Activated naive CD4-positive, alpha-beta T cell treated with anti-CD3 and anti-CD28 coated beads for 36 hours (primary cell): ENCODE measurements at regions of chr7 and their contacts with region 1.

Region 1: GRCh38 chr7:37181550-37181932 is 267.1 kb downstream of the ELMO1 start:
- DNase-seq: no peak
- H3K4me3 Mint-ChIP-seq: no peak overlapping the region
- H3K27ac Mint-ChIP-seq: no peak overlapping the region
- H3K4me1 Mint-ChIP-seq: peaks cover 7% of the 10 kb centered on the region
- H3K27me3 Mint-ChIP-seq: no peaks in the 10 kb centered on the region

Region 2: GRCh38 chr7:36473454-36474282 is 707.9 kb before region 1 on chr7:
- CTCF ChIA-PET with region 1: interaction called, 4 read pairs
- intact Hi-C with region 1: loop called (anchors 5 kb)
- DNase-seq: peak; percentile 70
- H3K4me3 Mint-ChIP-seq: no peak overlapping the region
- H3K27ac Mint-ChIP-seq: no peak overlapping the region
- H3K4me1 Mint-ChIP-seq: peaks cover 8% of the 10 kb centered on the region
- H3K27me3 Mint-ChIP-seq: no peaks in the 10 kb centered on the region

Region 3: DNA sequence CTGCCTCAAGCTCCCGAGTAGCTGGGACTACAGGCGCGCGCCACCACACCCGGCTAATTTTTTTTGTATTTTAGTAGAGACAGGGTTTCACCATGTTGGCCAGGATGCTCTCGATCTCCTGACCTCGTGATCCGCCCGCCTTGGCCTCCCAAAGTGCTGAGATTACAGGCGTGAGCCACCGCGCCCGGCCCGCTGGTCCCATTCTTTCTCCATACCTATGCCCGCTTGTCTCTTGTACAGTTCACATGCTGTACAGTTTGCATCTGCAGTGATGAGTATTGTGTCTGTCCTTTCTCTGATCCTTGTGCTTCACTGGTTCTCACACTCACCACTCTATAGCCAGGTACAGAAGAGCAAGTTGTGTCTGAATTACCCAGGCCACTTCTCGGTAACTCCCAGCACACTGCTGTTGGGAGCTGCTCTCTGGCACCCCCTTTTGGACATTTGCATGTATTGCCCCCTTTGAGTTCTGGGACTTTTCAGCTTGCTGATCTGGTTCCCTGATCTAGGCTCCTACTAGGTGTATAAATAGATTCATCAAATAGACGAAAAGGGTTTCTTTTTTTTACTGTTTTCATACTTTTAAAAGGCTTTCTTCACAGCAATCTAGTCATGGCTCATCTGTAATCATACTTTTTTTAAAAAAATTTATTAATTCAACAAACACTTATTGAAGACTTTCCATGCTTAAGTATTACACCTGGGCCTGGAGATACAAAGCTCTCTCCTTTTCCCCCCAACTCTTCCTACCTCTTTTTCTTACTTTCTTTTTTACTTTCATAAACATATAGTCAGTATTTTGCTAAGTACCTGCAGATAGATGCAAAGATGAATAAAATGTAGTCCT is 510.7 kb before region 1 on chr7:
- CTCF ChIA-PET with region 1: interaction called, 6 read pairs
- intact Hi-C with region 1: loop called (anchors 2 kb)
- DNase-seq: peak; percentile 85
- H3K4me3 Mint-ChIP-seq: no peak overlapping the region
- H3K27ac Mint-ChIP-seq: no peak overlapping the region
- H3K4me1 Mint-ChIP-seq: peaks cover 29% of the 10 kb centered on the region
- H3K27me3 Mint-ChIP-seq: peaks cover 2% of the 10 kb centered on the region

Region 4: DNA sequence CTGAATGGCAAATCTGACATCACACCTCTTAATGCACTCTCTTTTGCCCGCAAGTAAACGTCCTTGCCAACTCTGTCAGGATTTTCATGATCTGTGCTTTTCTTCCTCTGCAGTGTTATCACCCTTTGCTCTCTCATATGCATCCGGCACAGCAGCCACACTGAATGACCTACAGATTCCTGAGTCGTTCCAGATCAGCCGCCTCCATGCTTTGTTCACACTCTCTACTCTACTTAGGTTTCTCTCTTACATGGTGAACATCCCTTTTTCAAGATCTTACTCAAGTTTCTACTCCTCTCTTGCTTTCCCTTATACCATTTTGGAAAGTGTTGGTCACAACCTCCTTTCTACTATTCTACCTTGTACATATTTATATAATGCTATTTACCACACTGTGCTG is 329.5 kb before region 1 on chr7:
- CTCF ChIA-PET with region 1: no interaction called
- intact Hi-C with region 1: no loop called
- DNase-seq: peak; percentile 18
- H3K4me3 Mint-ChIP-seq: no peak overlapping the region
- H3K27ac Mint-ChIP-seq: peak overlapping the region; percentile 54
- H3K4me1 Mint-ChIP-seq: peaks cover 17% of the 10 kb centered on the region
- H3K27me3 Mint-ChIP-seq: no peaks in the 10 kb centered on the region

Region 5: DNA sequence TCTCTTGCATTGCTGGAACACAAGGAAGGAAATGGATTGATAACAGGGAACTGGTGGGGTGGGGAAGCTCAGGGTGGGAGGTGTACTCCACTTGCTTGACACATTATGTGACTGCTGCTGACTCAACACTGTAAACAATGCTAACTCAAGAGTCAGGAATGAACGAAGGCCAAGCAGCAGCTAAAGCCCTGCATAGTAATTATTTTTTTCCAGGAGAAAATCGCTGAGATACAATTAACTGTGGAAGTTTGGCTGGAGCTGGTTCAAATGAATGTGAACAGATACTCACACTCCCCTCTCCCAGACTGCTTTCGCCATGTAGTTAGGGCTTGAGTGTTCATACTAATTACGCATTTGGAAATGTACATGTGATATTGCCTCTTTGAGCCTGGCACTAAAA is 286.3 kb before region 1 on chr7:
- CTCF ChIA-PET with region 1: interaction called, 5 read pairs
- intact Hi-C with region 1: loop called (anchors 10 kb)
- DNase-seq: no peak
- H3K4me3 Mint-ChIP-seq: no peak overlapping the region
- H3K27ac Mint-ChIP-seq: no peak overlapping the region
- H3K4me1 Mint-ChIP-seq: peaks cover 12% of the 10 kb centered on the region
- H3K27me3 Mint-ChIP-seq: no peaks in the 10 kb centered on the region

Region 6: DNA sequence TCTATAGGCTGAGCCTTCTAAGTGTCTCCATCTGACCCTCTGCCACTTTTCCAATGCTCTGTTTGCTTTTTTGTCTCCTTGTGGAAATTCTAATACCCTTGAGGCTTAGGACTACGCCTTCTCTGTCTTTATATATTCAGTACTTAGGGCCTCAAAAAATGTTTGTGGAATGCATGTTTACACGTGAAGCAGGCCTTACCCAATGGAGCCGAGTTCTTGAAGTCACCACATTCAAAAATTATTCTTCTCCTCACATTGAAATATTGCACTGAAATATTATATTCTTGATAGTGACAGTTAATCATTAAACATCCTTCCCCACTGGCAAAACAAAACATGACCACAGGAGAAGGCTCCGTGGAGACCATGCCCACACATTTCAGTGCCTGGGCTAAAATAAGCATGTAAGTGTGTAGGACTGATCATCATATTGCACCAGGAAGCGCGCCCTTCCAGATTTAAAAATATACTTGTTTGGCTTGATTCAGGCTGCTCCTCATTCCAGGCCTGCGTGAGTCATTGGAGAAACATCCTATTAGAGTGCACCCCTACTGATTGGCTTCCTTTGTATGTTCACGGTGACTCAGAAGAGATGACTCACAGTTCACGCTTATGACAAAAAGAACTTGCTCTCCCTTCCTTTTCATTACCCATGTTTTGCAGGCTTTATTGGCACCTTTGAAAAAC is 149.8 kb before region 1 on chr7:
- CTCF ChIA-PET with region 1: interaction called, 7 read pairs
- intact Hi-C with region 1: loop called (anchors 1 kb)
- DNase-seq: peak; percentile 79
- H3K4me3 Mint-ChIP-seq: no peak overlapping the region
- H3K27ac Mint-ChIP-seq: peak overlapping the region; percentile 50
- H3K4me1 Mint-ChIP-seq: peaks cover 60% of the 10 kb centered on the region
- H3K27me3 Mint-ChIP-seq: no peaks in the 10 kb centered on the region